Caco-2 (cell line): ENCODE measurements at regions of chr11 and their contacts with region 1.

Region 1: GRCh38 chr11:75160192-75160757 is 9.4 kb downstream of the SLCO2B1 start:
- DNase-seq: peak; percentile 61 to 75
- H3K4me3 ChIP-seq: peak overlapping the region; percentile 39
- H3K4me3 Mint-ChIP-seq: peak overlapping the region; percentile 84
- H3K27ac Mint-ChIP-seq: peak overlapping the region; percentile 97
- H3K4me1 ChIP-seq: peaks cover 98% of the 10 kb centered on the region
- H3K4me1 Mint-ChIP-seq: peaks cover 74% of the 10 kb centered on the region
- H3K27me3 ChIP-seq: no peaks in the 10 kb centered on the region
- H3K27me3 Mint-ChIP-seq: no peaks in the 10 kb centered on the region
- CTCF ChIP-seq: no peak

Region 2: DNA sequence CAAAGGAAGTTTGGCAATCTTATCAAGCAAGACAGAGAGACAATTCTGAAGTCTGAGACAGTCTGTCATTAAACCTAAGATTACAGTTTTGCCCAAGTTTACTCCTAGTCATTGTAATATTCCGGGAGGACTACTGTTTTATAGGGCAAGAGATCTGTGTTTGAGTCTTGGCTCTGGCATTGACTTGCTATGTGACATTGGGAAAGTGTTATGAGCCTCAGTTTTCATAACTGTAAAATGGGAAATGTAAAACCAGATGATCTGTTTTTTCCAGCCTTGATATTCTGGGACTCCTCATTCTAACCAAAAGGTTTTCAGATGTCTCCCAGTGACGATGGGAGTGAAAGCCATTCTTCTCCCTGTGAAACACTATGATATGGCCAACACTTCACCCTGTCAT is 33.7 kb before region 1 on chr11:
- CTCF ChIA-PET with region 1: no interaction called
- POLR2A ChIA-PET with region 1: no interaction called
- intact Hi-C with region 1: no loop called
- DNase-seq: no peak
- H3K4me3 ChIP-seq: no peak overlapping the region
- H3K4me3 Mint-ChIP-seq: no peak overlapping the region
- H3K27ac Mint-ChIP-seq: no peak overlapping the region
- H3K4me1 ChIP-seq: no peaks in the 10 kb centered on the region
- H3K4me1 Mint-ChIP-seq: no peaks in the 10 kb centered on the region
- H3K27me3 ChIP-seq: no peaks in the 10 kb centered on the region
- H3K27me3 Mint-ChIP-seq: peaks cover 17% of the 10 kb centered on the region
- CTCF ChIP-seq: no peak

Region 3: DNA sequence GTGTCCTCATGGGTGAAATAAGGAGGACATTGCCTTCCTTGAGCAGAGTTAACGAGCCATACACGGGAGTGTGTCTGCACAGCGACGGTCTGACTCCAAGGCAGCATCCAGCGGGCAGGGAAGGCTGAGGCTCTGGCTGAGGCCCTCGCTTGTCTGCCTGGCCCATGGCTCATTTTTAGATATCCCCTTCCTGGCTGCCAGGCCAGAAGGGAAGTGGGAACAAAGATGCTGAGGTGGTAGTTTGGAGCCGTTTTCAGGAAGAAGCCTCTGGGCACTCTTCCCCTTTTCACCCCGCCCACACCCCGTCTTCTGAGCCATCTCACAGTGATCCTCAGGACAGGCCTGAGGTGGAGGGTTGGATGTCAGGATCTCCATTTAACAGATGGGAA is 12.4 kb before region 1 on chr11:
- CTCF ChIA-PET with region 1: interaction called, 86 read pairs
- POLR2A ChIA-PET with region 1: interaction called, 43 read pairs
- intact Hi-C with region 1: loop called (anchors 1 kb)
- DNase-seq: no peak
- H3K4me3 ChIP-seq: no peak overlapping the region
- H3K4me3 Mint-ChIP-seq: no peak overlapping the region
- H3K27ac Mint-ChIP-seq: peak overlapping the region; percentile 75
- H3K4me1 ChIP-seq: peaks cover 91% of the 10 kb centered on the region
- H3K4me1 Mint-ChIP-seq: peaks cover 59% of the 10 kb centered on the region
- H3K27me3 ChIP-seq: no peaks in the 10 kb centered on the region
- H3K27me3 Mint-ChIP-seq: no peaks in the 10 kb centered on the region
- CTCF ChIP-seq: no peak

Region 4: DNA sequence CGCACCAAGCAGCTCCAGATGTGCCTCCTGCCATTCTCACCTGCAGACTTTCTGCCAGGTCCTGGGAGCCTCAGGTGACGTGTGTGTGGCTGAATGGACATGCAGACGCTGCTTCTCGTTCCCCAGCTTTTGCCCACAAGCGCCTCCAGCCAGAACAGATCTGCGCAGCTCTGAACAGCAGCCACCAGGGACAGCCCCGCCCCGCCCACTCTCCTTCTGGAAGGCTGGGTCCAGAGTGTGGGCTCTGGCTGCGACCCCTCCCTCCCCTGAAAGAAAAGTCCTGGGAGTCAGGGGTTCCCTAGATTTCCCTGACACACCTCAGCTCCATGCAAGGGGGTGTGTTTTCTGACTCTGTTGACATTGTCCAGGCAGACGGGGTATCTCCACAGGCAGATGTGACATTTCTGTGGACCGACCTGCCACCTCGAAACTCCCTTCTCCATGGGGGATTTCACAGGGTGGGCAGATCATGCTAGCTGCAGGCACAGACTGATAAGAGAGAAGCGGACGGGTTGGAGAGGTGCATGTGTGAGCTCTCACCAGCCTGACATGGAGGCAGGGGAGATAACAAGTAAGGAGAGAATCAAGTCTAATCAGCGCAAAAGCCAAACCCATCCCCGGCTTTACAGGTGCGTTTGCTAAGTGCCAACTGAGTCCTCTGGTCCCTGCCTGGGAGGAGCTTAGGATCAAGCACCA is 10.4 kb after region 1 on chr11:
- CTCF ChIA-PET with region 1: interaction called, 75 read pairs
- POLR2A ChIA-PET with region 1: interaction called, 106 read pairs
- intact Hi-C with region 1: loop called (anchors 1 kb)
- DNase-seq: peak in 1 of 2 experiments; percentile 50
- H3K4me3 ChIP-seq: no peak overlapping the region
- H3K4me3 Mint-ChIP-seq: no peak overlapping the region
- H3K27ac Mint-ChIP-seq: peak overlapping the region; percentile 94
- H3K4me1 ChIP-seq: peaks cover 60% of the 10 kb centered on the region
- H3K4me1 Mint-ChIP-seq: peaks cover 61% of the 10 kb centered on the region
- H3K27me3 ChIP-seq: no peaks in the 10 kb centered on the region
- H3K27me3 Mint-ChIP-seq: no peaks in the 10 kb centered on the region
- CTCF ChIP-seq: no peak

Region 5: GRCh38 chr11:75371941-75372789 is 211.9 kb after region 1 on chr11:
- CTCF ChIA-PET with region 1: no interaction called
- POLR2A ChIA-PET with region 1: no interaction called
- intact Hi-C with region 1: loop called (anchors 5 kb)
- DNase-seq: peak; percentile 74 to 78
- H3K4me3 ChIP-seq: no peak overlapping the region
- H3K4me3 Mint-ChIP-seq: peak overlapping the region; percentile 53
- H3K27ac Mint-ChIP-seq: peak overlapping the region; percentile 79
- H3K4me1 ChIP-seq: peaks cover 69% of the 10 kb centered on the region
- H3K4me1 Mint-ChIP-seq: peaks cover 58% of the 10 kb centered on the region
- H3K27me3 ChIP-seq: no peaks in the 10 kb centered on the region
- H3K27me3 Mint-ChIP-seq: no peaks in the 10 kb centered on the region
- CTCF ChIP-seq: no peak

Region 6: DNA sequence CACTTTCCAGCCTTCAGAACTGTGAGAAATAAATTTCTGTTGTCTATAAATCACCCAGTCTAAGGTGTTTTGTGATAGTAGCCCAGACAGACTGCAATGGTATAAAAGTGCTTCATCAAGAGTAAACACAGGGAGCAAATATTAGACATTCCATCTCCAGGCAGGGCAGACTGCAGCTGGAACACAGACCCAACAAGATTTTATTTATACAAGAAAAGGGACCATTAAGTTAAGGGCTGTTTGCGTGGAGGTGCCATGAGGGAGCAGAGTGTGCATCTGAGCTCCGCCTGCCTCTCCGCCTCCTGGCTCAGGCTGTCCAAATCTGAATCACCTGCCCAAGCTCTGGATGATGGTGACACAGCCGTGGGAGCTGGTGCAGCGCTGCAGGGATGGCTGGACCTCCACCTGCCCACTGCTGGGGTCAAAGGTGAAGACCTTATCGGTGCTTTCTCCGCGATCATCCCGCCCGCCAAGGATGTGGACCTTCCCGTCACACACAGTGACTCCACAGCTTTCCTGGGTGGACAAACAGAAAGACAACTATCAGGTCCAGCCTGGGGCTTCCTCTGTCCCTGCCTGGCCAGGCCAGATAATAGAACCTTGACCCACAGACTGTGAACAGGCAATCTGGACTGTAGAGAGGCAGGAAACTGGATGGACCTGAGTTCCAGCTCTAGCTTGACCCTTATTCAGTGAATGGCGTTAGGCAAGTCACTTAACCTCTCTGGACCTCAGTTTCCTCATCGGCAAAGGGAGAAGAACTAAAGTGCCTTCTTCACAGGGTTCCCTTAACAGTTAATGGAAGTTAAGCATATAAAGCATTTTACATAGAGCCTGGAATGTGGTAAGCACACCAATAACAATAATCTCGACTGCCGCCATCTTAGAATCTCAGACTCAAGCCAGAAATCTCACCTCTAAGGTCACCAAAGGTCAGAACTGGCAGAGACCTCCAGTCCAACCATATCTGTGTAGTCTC is 262.3 kb after region 1 on chr11:
- CTCF ChIA-PET with region 1: no interaction called
- POLR2A ChIA-PET with region 1: no interaction called
- intact Hi-C with region 1: loop called (anchors 5 kb)
- DNase-seq: peak; percentile 97 to 98
- H3K4me3 ChIP-seq: no peak overlapping the region
- H3K4me3 Mint-ChIP-seq: peak overlapping the region; percentile 66
- H3K27ac Mint-ChIP-seq: peak overlapping the region; percentile 92
- H3K4me1 ChIP-seq: peaks cover 56% of the 10 kb centered on the region
- H3K4me1 Mint-ChIP-seq: peaks cover 54% of the 10 kb centered on the region
- H3K27me3 ChIP-seq: no peaks in the 10 kb centered on the region
- H3K27me3 Mint-ChIP-seq: no peaks in the 10 kb centered on the region
- CTCF ChIP-seq: no peak